A673 (cell line): ENCODE measurements at regions of chr16 and their contacts with region 1.

Region 1: GRCh38 chr16:89860747-89861304 is 12.6 kb upstream of the TCF25 start:
- DNase-seq: peak; percentile 61
- H3K4me3 ChIP-seq: no peak overlapping the region
- H3K27ac ChIP-seq: no peak overlapping the region
- H3K4me1 ChIP-seq: no peaks in the 10 kb centered on the region
- H3K27me3 ChIP-seq: no peaks in the 10 kb centered on the region
- CTCF ChIP-seq: peak; percentile 96

Region 2: GRCh38 chr16:88686439-88687253 is 1174.2 kb before region 1 on chr16 and contains the start of gene SNAI3:
- CTCF ChIA-PET with region 1: no interaction called
- POLR2A ChIA-PET with region 1: no interaction called
- intact Hi-C with region 1: no loop called
- DNase-seq: peak; percentile 64
- H3K4me3 ChIP-seq: peak within 1 kb of the TSS; percentile 53
- H3K27ac ChIP-seq: no peak within 1 kb of the TSS
- H3K4me1 ChIP-seq: peaks cover 6% of the 10 kb centered on the region
- H3K27me3 ChIP-seq: no peaks in the 10 kb centered on the region
- CTCF ChIP-seq: no peak
- total RNA-seq, gene SNAI3: not detected in 2 replicates

Region 3: GRCh38 chr16:89700100-89700648 is 160.7 kb before region 1 on chr16:
- CTCF ChIA-PET with region 1: interaction called, 3 read pairs
- POLR2A ChIA-PET with region 1: no interaction called
- intact Hi-C with region 1: loop called (anchors 10 kb)
- DNase-seq: peak; percentile 97
- H3K4me3 ChIP-seq: peak overlapping the region; percentile 80
- H3K27ac ChIP-seq: peak overlapping the region; percentile 76
- H3K4me1 ChIP-seq: peaks cover 10% of the 10 kb centered on the region
- H3K27me3 ChIP-seq: no peaks in the 10 kb centered on the region
- CTCF ChIP-seq: peak; percentile 52

Region 4: GRCh38 chr16:89749647-89750046 is 111.2 kb before region 1 on chr16:
- CTCF ChIA-PET with region 1: no interaction called
- POLR2A ChIA-PET with region 1: no interaction called
- intact Hi-C with region 1: loop called (anchors 5 kb)
- DNase-seq: no peak
- H3K4me3 ChIP-seq: no peak overlapping the region
- H3K27ac ChIP-seq: no peak overlapping the region
- H3K4me1 ChIP-seq: no peaks in the 10 kb centered on the region
- H3K27me3 ChIP-seq: no peaks in the 10 kb centered on the region
- CTCF ChIP-seq: no peak

Region 5: GRCh38 chr16:89779231-89779908 is 81.5 kb before region 1 on chr16:
- CTCF ChIA-PET with region 1: no interaction called
- POLR2A ChIA-PET with region 1: interaction called, 10 read pairs
- intact Hi-C with region 1: no loop called
- DNase-seq: no peak
- H3K4me3 ChIP-seq: no peak overlapping the region
- H3K27ac ChIP-seq: no peak overlapping the region
- H3K4me1 ChIP-seq: no peaks in the 10 kb centered on the region
- H3K27me3 ChIP-seq: no peaks in the 10 kb centered on the region
- CTCF ChIP-seq: no peak

Region 6: GRCh38 chr16:89873972-89874689 is 13.3 kb after region 1 on chr16:
- CTCF ChIA-PET with region 1: interaction called, 13 read pairs
- POLR2A ChIA-PET with region 1: no interaction called
- intact Hi-C with region 1: no loop called
- DNase-seq: peak; percentile 94
- H3K4me3 ChIP-seq: peak overlapping the region; percentile 75
- H3K27ac ChIP-seq: peak overlapping the region; percentile 99
- H3K4me1 ChIP-seq: peaks cover 7% of the 10 kb centered on the region
- H3K27me3 ChIP-seq: no peaks in the 10 kb centered on the region
- CTCF ChIP-seq: no peak